IMR-90 (cell line): ENCODE measurements at regions of chr2 and their contacts with region 1.

Region 1: GRCh38 chr2:127479219-127479825 is 47.0 kb downstream of the IWS1 start:
- DNase-seq: peak; percentile 73
- ATAC-seq: peak; percentile 80
- H3K4me3 ChIP-seq: no peak overlapping the region
- H3K27ac ChIP-seq: no peak overlapping the region
- H3K4me1 ChIP-seq: no peaks in the 10 kb centered on the region
- H3K27me3 ChIP-seq: no peaks in the 10 kb centered on the region
- CTCF ChIP-seq: peak; percentile 72
- POLR2A ChIP-seq: no peak
- RAD21 ChIP-seq: peak; percentile 87

Region 2: DNA sequence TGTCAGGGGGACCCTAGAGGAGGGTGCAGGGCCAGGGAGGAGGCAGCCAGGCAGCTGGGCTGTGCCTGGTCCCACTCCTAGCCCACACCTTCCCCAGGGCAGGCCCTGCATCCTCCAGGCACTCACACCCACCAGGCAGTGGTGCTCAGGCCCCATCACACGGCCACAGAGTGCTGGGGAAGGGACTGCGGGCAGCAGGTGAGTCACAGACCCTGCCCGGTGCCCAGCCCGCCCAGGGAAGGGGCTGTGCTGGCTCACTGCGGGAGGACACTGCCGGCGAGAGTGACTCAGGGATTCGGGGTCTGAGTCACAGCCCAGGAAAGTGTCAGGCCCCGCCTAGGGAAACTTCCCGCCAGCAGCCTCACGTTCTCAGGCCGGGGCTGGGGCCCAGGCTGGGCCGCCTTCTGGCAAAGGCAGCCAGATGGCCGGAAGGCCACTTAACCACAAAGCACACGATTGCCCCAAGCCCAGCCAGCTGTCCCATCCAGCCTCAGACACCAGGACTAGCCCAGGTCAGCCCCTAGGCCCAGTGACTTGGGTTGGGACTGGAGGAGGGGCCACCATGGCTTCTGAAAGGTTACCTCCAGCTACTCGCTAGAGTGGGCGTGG is 414.6 kb before region 1 on chr2:
- CTCF ChIA-PET with region 1: no interaction called
- POLR2A ChIA-PET with region 1: no interaction called
- dilution Hi-C with region 1: no loop called
- in situ Hi-C with region 1: no loop called
- intact Hi-C with region 1: loop called (anchors 10 kb)
- DNase-seq: peak; percentile 97
- ATAC-seq: peak; percentile 93
- H3K4me3 ChIP-seq: no peak overlapping the region
- H3K27ac ChIP-seq: peak overlapping the region; percentile 78
- H3K4me1 ChIP-seq: peaks cover 16% of the 10 kb centered on the region
- H3K27me3 ChIP-seq: no peaks in the 10 kb centered on the region
- CTCF ChIP-seq: peak; percentile 60
- POLR2A ChIP-seq: peak; percentile 62
- RAD21 ChIP-seq: peak; percentile 73

Region 3: DNA sequence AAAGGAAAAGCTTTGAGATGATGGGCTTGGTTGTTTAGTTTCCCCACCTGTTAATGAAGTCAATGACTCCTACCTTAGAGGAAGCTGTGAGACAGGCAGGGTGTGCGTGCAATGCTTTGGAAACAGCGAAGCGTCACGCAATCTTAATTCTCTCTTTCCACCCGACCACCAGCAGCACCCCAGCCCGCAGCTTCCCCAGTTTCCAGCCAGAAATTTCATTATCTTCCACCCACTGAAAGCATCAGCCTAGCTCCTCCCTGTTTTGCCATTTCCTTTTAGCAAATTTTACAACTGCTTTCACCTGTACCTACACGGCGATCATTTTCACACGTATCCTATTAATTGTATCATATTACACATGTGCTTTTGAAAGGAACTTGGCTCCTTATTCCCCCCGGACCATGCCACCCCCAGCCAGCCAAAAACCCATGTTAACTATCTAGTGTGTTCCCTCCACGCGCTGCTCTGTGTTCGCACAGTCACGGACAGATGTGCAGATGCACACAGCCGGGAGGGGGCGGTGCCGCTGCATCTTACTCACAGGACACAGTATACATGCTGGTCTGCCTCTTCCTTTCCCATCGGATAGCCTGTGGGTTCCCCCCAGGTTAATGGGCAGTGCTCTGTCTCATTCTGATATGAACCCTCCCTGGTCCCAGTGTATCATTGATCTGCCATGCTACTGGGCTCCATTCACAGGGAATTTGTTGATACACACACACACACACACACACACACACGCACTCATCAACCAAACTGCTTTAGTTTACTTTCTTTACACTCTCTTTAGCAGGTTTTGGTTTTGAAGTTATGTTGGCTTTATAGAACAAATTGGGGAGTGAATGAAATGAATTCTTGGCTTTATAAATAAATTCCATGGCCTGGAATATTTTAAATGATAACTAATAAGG is 281.6 kb before region 1 on chr2:
- CTCF ChIA-PET with region 1: no interaction called
- POLR2A ChIA-PET with region 1: no interaction called
- dilution Hi-C with region 1: no loop called
- in situ Hi-C with region 1: no loop called
- intact Hi-C with region 1: loop called (anchors 5 kb)
- DNase-seq: peak; percentile 50
- ATAC-seq: peak; percentile 82
- H3K4me3 ChIP-seq: no peak overlapping the region
- H3K27ac ChIP-seq: no peak overlapping the region
- H3K4me1 ChIP-seq: peaks cover 8% of the 10 kb centered on the region
- H3K27me3 ChIP-seq: peaks cover 10% of the 10 kb centered on the region
- CTCF ChIP-seq: peak; percentile 56
- POLR2A ChIP-seq: no peak
- RAD21 ChIP-seq: peak; percentile 70

Region 4: DNA sequence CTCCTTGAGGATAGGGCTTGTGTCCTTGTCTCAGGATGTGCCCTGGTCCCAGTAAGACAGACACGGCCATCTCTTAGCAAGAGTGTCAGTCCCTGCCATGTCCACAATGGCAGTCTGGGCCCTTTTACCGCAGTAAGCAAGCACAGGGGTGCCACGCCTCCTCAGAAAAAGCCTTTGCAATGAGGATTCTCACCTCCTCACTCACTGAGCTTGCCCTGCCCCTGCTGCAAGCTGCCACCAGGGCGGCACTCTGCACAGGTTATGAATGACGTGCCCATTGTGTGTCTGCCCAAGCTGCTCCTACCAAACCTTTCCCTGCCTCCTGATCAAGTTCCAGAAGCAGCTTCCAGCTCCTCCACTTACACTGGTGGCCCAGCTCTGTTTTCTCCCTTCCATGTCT is 208.7 kb before region 1 on chr2:
- CTCF ChIA-PET with region 1: no interaction called
- POLR2A ChIA-PET with region 1: no interaction called
- dilution Hi-C with region 1: no loop called
- in situ Hi-C with region 1: no loop called
- intact Hi-C with region 1: no loop called
- DNase-seq: no peak
- ATAC-seq: no peak
- H3K4me3 ChIP-seq: no peak overlapping the region
- H3K27ac ChIP-seq: no peak overlapping the region
- H3K4me1 ChIP-seq: no peaks in the 10 kb centered on the region
- H3K27me3 ChIP-seq: no peaks in the 10 kb centered on the region
- CTCF ChIP-seq: no peak
- POLR2A ChIP-seq: no peak
- RAD21 ChIP-seq: no peak

Region 5: DNA sequence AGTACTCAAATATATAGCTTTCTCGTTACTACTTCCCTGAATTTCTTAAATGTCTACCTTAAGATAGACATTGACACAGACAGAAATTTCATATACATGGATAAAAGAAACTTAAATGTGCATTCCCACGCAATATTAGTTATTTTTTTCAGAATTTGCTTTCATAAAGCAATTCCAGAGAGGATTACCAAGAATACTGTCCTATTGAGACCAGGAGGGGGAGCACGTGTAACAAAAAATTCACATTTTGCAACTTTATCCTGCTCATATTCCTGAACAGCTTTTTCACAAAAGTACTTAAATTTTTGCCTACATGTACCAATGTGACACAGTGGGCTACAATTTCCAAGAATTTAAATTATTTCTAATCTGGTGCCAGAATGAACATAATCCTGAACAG is 154.7 kb before region 1 on chr2:
- CTCF ChIA-PET with region 1: interaction called, 15 read pairs
- POLR2A ChIA-PET with region 1: no interaction called
- dilution Hi-C with region 1: no loop called
- in situ Hi-C with region 1: loop called (anchors 5 kb)
- intact Hi-C with region 1: loop called (anchors 1 kb)
- DNase-seq: peak; percentile 68
- ATAC-seq: peak; percentile 28; the same call in 1 of the 2 replicates
- H3K4me3 ChIP-seq: no peak overlapping the region
- H3K27ac ChIP-seq: no peak overlapping the region
- H3K4me1 ChIP-seq: peaks cover 3% of the 10 kb centered on the region
- H3K27me3 ChIP-seq: no peaks in the 10 kb centered on the region
- CTCF ChIP-seq: peak; percentile 70
- POLR2A ChIP-seq: no peak
- RAD21 ChIP-seq: peak; percentile 71

Region 6: GRCh38 chr2:127387655-127388422 is 91.5 kb before region 1 on chr2 and contains the start of gene MAP3K2:
- CTCF ChIA-PET with region 1: no interaction called
- POLR2A ChIA-PET with region 1: no interaction called
- dilution Hi-C with region 1: no loop called
- in situ Hi-C with region 1: no loop called
- intact Hi-C with region 1: loop called (anchors 10 kb)
- DNase-seq: peak; percentile 90
- ATAC-seq: peak; percentile 92
- H3K4me3 ChIP-seq: peak within 1 kb of the TSS; percentile 98
- H3K27ac ChIP-seq: peak within 1 kb of the TSS; percentile 95
- H3K4me1 ChIP-seq: peaks cover 5% of the 10 kb centered on the region
- H3K27me3 ChIP-seq: no peaks in the 10 kb centered on the region
- CTCF ChIP-seq: peak; percentile 8; the same call in 1 of the 2 replicates
- POLR2A ChIP-seq: peak; percentile 95
- RAD21 ChIP-seq: no peak; the same call in 1 of the 2 replicates
- total RNA-seq, gene MAP3K2: 30.8 and 31.9 TPM in 2 replicates

Region 7: DNA sequence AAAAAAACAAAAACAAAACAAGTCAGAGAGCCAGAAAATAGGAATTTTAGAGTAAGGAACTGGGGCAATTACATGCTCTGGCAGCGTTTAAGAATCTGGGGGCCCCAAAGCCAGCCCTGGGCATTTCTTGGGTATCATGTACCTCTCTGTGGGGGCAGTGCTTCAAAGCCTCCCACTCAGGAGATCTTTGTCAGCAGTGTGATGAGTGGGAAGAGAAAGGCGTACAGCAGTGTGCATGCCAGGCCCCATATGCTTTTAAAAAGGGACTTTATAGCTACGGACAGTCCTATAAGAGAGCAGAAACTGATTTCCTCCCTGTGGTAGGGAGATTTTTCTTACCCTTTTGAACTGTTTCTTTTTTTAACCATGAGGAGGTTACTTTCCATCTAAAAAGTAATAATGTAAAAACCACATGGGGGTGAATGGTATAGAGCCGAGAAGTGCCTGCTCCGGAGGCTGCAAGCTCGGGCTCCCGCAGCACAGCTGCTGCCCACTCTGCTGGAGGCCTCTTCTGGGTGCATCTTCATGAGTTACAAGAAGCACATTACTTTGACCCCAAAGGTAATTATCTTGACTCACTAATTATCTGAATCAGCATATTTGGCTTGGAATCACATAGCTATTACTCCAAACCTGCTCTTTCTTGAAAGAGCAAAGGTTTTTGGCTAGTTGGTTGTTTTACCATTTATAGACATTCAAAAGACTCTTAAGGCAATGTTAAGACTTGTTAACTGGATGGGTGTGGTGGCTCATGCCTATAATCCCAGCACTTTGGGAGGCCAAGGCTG is 14.7 kb before region 1 on chr2:
- CTCF ChIA-PET with region 1: no interaction called
- POLR2A ChIA-PET with region 1: no interaction called
- dilution Hi-C with region 1: no loop called
- in situ Hi-C with region 1: no loop called
- intact Hi-C with region 1: no loop called
- DNase-seq: no peak
- ATAC-seq: no peak
- H3K4me3 ChIP-seq: no peak overlapping the region
- H3K27ac ChIP-seq: no peak overlapping the region
- H3K4me1 ChIP-seq: no peaks in the 10 kb centered on the region
- H3K27me3 ChIP-seq: no peaks in the 10 kb centered on the region
- CTCF ChIP-seq: no peak
- POLR2A ChIP-seq: no peak
- RAD21 ChIP-seq: no peak